Heart left ventricle (tissue), 16 donors: ENCODE measurements at regions of chr9 and their contacts with region 1.

Region 1: GRCh38 chr9:20622330-20623020 is at the start of gene MLLT3:
- DNase-seq: peak; percentile 96 to 99 (median 97)
- ATAC-seq: peak; percentile 95 to 98 (median 96)
- H3K4me3 ChIP-seq: peak within 1 kb of the TSS; percentile 69 to 95 (median 90)
- H3K27ac ChIP-seq: peak within 1 kb of the TSS; percentile 77 to 94 (median 88)
- H3K4me1 ChIP-seq: peaks cover 0 to 41% (median 26%) of the 10 kb centered on the region in 12 donors
- H3K27me3 ChIP-seq: no peaks in the 10 kb centered on the region
- CTCF ChIP-seq: peak in 4 of 12 donors; percentile 20 to 48 (median 36)
- POLR2A ChIP-seq: peak in 1 of 2 donors; percentile 73
- total RNA-seq, gene MLLT3: 10.8 to 21.0 (median 16.5) TPM

Region 2: GRCh38 chr9:19925817-19926503 is 696.5 kb before region 1 on chr9:
- intact Hi-C with region 1: loop called in 8 of 10 experiments (anchors 2 to 10 kb)
- DNase-seq: peak; percentile 64 to 70 (median 69)
- ATAC-seq: peak; percentile 83 to 96 (median 94)
- H3K4me3 ChIP-seq: peak overlapping the region in 11 of 12 donors; percentile 14 to 54 (median 41)
- H3K27ac ChIP-seq: no peak overlapping the region
- H3K4me1 ChIP-seq: peaks cover 0 to 8% (median 0%) of the 10 kb centered on the region in 12 donors
- H3K27me3 ChIP-seq: peaks cover 0 to 4% (median 0%) of the 10 kb centered on the region in 9 donors
- CTCF ChIP-seq: peak; percentile 92 to 99 (median 96)
- POLR2A ChIP-seq: no peak

Region 3: DNA sequence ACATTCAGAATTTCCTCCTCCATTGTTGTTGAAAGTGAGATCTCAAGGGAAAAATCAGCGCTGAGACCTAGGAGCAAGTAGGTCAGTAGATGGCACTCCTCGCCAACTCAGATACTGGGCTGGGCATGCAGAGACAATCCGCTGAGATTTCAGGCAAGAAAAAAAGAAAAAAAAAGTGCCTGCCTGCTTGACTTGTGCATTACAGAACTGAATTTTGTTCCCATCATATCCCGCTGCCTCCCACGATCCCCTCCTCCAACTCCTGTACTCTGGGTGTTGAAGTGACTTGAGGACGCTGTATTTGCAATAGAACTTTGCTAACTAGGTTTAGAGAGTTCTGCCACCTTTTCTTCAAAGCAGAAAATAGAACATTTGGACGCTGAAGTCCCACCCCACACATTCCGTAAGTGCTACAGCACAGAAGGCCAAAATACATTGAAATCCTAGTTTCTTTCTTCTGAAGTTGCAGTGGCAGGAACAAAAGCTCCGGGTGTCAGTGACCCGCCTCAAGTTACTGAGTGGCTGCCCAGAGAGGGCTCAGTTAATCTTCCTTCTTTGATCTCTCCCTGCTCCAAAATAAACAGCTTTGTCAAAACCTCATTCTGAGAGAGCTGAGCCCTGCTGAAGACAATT is 266.0 kb before region 1 on chr9:
- intact Hi-C with region 1: loop called (anchors 1 to 5 kb)
- DNase-seq: peak; percentile 58 to 70 (median 68)
- ATAC-seq: peak; percentile 76 to 95 (median 94)
- H3K4me3 ChIP-seq: peak overlapping the region in 8 of 12 donors; percentile 1 to 32 (median 28)
- H3K27ac ChIP-seq: peak overlapping the region in 10 of 12 donors; percentile 20 to 58 (median 43)
- H3K4me1 ChIP-seq: peaks cover 0 to 25% (median 15%) of the 10 kb centered on the region in 12 donors
- H3K27me3 ChIP-seq: no peaks in the 10 kb centered on the region
- CTCF ChIP-seq: peak; percentile 56 to 82 (median 73)
- POLR2A ChIP-seq: no peak

Region 4: DNA sequence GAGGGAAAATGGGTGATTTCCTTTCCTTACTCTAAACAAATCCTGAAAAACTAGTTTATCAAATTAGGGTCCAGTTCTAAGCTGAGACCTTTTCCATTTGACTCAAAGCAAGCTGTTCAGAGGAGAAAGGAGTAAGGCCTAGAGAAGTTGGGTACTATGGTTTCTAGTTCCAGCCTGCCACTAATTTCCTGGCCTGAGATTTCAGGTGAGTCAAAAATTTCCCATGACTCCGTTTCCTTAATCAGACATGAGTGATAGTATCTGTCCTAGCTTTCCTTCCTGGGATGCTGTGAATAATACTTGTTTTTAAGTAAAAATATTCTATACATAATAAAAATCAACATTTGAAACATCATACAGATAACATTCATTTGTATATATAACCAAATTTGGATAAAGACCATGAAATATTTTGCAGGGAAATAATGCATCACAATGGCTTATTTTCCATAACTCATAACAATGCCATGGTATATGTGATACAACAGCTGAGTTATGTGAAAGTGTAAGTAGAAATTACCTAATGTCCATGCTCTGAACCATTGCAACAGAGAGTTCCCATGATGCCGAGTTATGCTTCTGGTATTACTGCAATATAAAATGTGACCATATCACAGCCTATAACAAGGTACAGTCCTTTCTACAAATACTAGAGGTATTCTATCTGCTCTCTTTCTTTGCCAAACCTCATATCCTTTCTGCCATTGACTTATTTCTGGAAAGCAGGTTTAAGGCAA is 142.9 kb before region 1 on chr9:
- intact Hi-C with region 1: loop called in 2 of 10 experiments (anchors 5 kb)
- DNase-seq: no peak
- ATAC-seq: no peak
- H3K4me3 ChIP-seq: no peak overlapping the region
- H3K27ac ChIP-seq: no peak overlapping the region
- H3K4me1 ChIP-seq: peaks cover 0 to 47% (median 23%) of the 10 kb centered on the region in 12 donors
- H3K27me3 ChIP-seq: no peaks in the 10 kb centered on the region
- CTCF ChIP-seq: no peak
- POLR2A ChIP-seq: no peak

Region 5: DNA sequence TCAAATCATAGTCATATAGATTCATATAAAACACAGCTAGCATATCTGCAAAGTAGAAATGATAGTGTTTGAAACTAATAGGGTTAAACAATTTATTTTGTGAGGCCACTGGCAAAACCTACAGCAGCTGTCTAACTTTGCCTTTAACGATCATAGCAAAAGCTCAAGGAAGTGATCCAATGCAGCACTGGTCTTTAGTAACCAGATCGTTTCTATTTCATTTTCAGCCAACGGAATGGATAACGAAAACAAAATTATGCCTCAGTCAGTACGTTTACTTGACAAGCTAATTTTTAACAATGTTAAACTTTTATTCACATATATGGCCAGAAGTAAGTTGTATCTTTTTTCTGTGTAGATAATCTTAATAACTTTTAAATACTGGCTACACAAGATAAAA is 17.9 kb before region 1 on chr9:
- intact Hi-C with region 1: loop called in 1 of 10 experiments (anchors 2 kb)
- DNase-seq: no peak
- ATAC-seq: peak in 2 of 4 donors; percentile 71 to 73
- H3K4me3 ChIP-seq: peak overlapping the region in 9 of 12 donors; percentile 14 to 47 (median 35)
- H3K27ac ChIP-seq: peak overlapping the region in 9 of 12 donors; percentile 3 to 57 (median 33)
- H3K4me1 ChIP-seq: peaks cover 0 to 57% (median 32%) of the 10 kb centered on the region in 12 donors
- H3K27me3 ChIP-seq: no peaks in the 10 kb centered on the region
- CTCF ChIP-seq: no peak
- POLR2A ChIP-seq: no peak

Region 6: DNA sequence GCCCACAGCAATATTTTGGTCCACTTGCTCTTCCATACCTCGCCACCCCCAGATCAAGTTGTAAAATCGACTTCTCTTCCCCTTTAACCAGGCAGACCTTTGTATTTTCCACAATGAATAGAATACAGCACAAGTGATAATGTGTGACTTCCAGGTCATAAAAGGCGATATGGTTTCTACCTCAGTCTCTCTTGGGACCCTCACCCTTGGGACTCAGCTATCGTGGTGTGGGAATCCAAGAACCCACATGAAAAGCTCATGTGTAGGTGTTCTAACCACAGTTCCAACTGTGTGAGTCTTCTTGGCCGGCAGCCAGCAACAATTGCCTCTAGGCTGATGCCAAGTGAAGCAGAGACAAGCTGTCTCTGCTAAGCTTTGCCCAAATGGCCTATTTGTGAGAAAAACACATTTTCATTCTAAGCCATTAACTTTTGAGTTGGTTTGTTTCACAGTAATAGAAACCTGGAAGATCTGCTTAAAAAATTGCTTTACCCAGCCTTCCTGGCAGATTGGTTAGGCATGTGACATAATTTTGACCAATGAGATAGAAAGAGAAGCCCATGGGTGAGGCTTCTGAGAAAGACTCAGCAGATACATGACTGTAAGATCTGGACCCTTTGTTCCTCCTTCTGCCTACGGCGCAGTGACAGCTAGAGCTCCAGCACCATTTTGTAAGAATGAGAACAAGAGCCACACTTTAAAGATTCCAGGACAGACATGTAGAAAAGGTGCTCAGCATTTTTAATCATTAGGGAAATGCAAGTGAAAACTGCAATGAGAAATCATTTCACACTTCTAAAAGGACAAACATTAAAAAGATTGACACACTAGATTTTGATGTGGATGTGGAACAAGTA is 18.1 kb after region 1 on chr9:
- intact Hi-C with region 1: no loop called
- DNase-seq: peak; percentile 33 to 75 (median 54)
- ATAC-seq: no peak
- H3K4me3 ChIP-seq: no peak overlapping the region
- H3K27ac ChIP-seq: no peak overlapping the region
- H3K4me1 ChIP-seq: no peaks in the 10 kb centered on the region
- H3K27me3 ChIP-seq: no peaks in the 10 kb centered on the region
- CTCF ChIP-seq: no peak
- POLR2A ChIP-seq: no peak

Region 7: DNA sequence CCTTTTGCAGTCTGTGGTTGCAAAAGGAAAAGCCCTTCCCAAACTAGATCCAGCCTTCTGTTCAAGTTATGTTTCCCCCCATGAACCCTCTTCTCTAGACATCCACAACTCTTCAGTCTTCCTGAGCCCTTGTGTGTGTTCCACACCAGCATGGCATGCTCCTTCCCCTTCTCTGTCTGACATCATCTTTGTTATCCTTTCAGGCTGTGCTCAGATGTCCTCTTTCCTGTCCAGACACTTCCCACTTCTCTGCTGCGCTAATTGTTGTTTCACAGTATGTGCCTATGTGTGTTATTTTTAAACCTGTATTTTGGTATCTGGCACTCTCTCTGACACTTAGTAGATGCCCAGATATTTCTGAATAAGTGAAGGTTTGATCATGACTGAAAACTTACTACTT is 99.7 kb after region 1 on chr9:
- intact Hi-C with region 1: no loop called
- DNase-seq: peak in 1 of 5 donors; percentile 24
- ATAC-seq: peak; percentile 92 to 98 (median 96)
- H3K4me3 ChIP-seq: no peak overlapping the region
- H3K27ac ChIP-seq: peak overlapping the region in 3 of 12 donors; percentile 15 to 69 (median 48)
- H3K4me1 ChIP-seq: peaks cover 0 to 20% (median 5%) of the 10 kb centered on the region in 12 donors
- H3K27me3 ChIP-seq: no peaks in the 10 kb centered on the region
- CTCF ChIP-seq: no peak
- POLR2A ChIP-seq: no peak

Region 8: DNA sequence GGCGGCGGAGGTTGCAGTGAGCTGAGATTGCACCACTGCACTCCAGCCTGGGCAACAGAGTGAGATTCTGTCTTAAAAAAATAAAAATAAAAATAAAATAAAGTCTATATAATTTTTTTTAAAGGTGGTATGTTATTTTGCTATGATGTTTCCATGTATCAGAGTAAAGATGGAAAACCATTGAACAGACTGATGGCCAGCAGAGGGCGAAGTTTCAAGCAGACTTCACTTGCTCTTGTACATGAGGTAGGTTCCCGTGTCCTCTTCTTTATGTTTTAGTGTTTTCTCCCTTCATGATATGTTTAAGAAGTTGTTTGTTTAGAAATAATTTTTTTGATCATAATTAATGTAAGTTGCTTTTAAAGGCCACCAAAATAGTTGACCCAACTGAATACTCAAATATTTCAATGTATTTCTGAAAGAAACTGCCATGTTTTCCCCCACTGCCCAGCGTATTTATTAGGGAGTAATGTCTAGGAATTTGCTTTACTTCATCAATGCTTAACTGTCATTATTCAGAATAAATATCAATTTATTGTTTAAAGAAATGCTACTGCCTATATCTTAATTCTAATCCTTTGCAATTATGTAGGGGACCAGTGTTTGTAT is 262.6 kb after region 1 on chr9:
- intact Hi-C with region 1: loop called in 4 of 10 experiments (anchors 10 kb)
- DNase-seq: peak; percentile 26 to 49 (median 44)
- ATAC-seq: no peak
- H3K4me3 ChIP-seq: no peak overlapping the region
- H3K27ac ChIP-seq: no peak overlapping the region
- H3K4me1 ChIP-seq: no peaks in the 10 kb centered on the region
- H3K27me3 ChIP-seq: no peaks in the 10 kb centered on the region
- CTCF ChIP-seq: peak; percentile 52 to 74 (median 66)
- POLR2A ChIP-seq: no peak

Region 9: DNA sequence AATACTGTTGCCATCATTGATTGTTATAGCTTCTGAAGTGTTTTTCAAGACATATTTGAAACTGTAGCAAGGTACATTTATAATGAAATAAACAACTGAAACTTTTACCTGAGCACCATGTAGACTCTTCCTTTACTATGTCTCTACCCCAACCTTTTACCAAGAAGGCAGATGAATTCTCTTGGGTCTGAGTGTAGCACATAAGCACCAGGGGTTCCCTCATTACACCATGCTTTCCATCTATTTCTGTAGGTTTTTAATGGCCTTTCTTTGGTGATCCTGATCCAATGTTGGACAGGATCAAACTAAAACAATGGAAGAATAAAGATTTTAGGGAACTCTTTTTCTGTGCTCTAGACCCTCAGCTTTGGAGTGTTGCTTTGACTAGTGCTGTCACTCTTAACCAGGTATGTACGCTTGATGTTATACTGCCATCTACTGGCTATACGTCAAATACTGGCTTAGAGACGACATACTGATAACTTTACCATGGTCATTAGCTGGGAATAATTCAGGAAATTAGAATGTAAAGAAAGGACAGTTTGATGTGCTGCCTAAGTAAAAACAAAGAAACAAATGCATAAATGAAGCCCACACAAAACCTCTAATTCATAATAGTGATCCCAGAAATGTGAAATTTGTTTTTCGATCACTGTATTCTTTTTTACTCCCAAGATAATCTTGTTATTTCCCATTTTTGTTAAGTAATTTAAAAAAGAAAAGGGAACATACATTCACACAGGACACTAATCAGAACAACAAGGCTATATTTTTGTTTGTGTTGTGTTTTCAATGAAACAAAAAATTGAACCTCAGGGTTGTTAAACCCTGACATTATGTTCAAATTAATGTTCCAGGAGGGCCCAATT is 488.5 kb after region 1 on chr9:
- intact Hi-C with region 1: loop called in 5 of 10 experiments (anchors 5 to 10 kb)
- DNase-seq: no peak
- ATAC-seq: peak in 3 of 4 donors; percentile 79 to 82 (median 80)
- H3K4me3 ChIP-seq: no peak overlapping the region
- H3K27ac ChIP-seq: no peak overlapping the region
- H3K4me1 ChIP-seq: no peaks in the 10 kb centered on the region
- H3K27me3 ChIP-seq: no peaks in the 10 kb centered on the region
- CTCF ChIP-seq: peak; percentile 73 to 90 (median 85)
- POLR2A ChIP-seq: no peak